ENCODE measurements at regions of chr11 and their contacts with region 1.

Region 1: DNA sequence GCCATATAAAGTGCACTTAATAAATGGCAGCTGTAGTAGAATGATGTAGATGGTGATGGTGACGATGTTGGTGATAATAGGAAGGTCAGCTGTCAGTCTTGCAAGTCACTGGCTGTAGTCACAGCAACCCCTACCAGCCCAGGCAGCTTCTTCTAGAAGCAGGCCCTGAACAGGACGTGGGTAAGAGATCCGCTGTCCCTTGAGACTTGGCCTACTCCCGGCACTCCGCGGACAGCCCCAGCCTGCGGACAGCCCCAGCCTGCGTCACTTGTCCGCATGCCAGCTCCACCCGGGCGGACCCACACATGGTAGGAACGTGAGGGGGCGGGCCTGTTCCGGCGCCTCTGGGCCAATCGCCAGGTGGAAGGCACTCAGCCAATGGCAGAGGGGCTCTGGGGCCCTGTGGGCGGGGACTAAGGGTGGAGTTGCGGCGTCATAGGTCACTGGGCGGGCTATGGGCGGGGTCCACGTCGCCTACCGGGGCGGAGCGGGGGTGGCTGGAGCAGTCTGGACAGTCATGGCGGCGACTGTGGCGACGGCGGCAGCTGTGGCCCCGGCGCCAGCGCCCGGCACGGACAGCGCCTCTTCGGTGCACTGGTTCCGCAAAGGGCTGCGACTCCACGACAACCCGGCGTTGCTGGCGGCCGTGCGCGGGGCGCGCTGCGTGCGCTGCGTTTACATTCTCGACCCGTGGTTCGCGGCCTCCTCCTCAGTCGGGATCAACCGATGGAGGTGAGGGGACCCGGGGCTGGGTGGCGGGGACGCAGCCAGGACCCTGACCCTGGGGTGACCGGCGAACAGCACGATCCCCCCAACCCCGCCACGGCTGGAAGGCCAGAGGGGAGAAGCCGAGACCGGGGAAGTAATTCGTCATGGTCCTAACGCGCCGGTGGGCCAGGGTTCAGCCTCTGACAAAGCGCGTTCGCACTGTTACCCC is at the start of gene CRY2:
- DNase-seq: peak; percentile 97
- H3K4me3 ChIP-seq: peak within 1 kb of the TSS; percentile 76 to 98 (median 98)
- H3K27ac ChIP-seq: peak within 1 kb of the TSS; percentile 80
- H3K4me1 ChIP-seq: peaks cover 8% of the 10 kb centered on the region
- H3K27me3 ChIP-seq: no peaks in the 10 kb centered on the region
- CTCF ChIP-seq: no peak
- total RNA-seq, gene CRY2: 13.2 to 14.0 TPM

Region 2: GRCh38 chr11:44565211-44565952 is 1281.9 kb before region 1 on chr11 and contains the start of gene CD82:
- CTCF ChIA-PET with region 1: interaction called, 17 read pairs
- dilution Hi-C with region 1: no loop called
- in situ Hi-C with region 1: no loop called
- intact Hi-C with region 1: no loop called
- DNase-seq: peak; percentile 98
- H3K4me3 ChIP-seq: peak within 1 kb of the TSS; percentile 40 to 83 (median 69)
- H3K27ac ChIP-seq: peak within 1 kb of the TSS; percentile 95
- H3K4me1 ChIP-seq: peaks cover 83% of the 10 kb centered on the region
- H3K27me3 ChIP-seq: no peaks in the 10 kb centered on the region
- CTCF ChIP-seq: peak in 1 of 2 donors; percentile 35
- total RNA-seq, gene CD82: 38.8 to 309 TPM

Region 3: DNA sequence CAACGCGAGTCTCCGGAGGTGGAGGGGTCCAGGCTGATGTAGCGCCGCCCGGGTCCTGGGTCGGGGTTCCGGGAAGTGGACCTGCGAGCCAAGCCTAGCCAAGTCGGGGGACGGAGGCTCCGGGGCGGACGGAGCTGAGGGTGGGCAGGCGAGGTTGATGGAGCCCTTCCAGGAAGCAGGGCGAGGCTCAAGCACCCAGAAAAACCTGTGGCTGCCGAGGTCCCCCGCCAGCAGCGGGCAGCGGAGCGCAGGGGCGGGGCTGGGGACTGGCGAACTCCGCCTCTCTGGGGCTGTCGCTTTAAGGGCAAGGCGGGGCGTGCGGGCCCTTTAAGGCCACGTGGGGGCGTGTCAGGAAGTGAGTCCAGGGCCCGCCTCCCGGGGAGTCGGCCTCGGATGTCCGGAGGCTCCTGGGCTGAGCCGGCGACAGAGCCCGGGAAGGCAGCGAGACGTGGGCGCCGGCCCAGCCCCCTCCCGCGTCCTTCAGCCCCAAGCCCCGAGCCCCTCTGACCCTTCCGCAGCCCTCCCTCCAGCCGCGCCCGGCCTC is 42.4 kb before region 1 on chr11 and contains the start of gene SLC35C1:
- CTCF ChIA-PET with region 1: no interaction called
- dilution Hi-C with region 1: no loop called
- in situ Hi-C with region 1: no loop called
- intact Hi-C with region 1: loop called (anchors 2 kb)
- DNase-seq: peak; percentile 91
- H3K4me3 ChIP-seq: peak within 1 kb of the TSS; percentile 74 to 91 (median 85)
- H3K27ac ChIP-seq: peak within 1 kb of the TSS; percentile 43
- H3K4me1 ChIP-seq: peaks cover 15% of the 10 kb centered on the region
- H3K27me3 ChIP-seq: no peaks in the 10 kb centered on the region
- CTCF ChIP-seq: peak in 1 of 2 donors; percentile 23
- total RNA-seq, gene SLC35C1: 11.2 to 18.0 TPM

Region 4: DNA sequence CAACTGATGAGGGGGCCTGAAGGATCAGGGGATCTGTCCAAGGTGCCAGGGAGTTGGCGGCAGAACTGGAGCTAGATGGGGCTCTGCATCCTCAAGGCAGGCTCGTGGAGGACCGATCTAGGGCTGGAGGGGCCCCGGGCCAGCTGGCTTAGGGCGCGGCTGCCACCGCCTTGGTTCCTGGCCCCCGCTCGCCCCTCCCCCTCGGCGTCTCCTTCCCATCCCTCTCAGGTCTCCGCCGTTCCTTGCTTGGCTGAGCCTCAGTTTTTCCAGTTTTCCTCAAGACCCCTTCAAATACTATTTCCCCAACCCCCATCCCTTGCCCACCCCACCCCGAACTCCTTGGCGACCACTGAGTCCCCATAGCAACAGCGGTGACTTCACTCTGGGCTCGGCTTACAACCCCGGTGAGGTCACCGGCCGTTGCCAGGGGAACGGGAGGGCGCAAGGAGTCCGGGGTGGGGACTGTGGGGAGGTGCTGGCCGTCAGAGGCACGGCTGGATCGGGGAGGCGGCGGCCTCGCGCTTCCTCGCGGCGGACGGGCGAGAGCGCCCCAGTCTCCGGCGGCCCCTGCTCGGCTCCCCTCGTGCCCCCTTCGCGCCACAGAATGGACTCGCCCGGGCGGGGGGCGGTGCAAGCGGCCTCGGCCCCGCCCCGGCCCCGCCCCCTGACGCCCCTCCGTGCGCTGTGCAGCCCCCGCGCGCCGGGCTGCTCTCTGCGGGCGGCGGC is 52.4 kb after region 1 on chr11:
- CTCF ChIA-PET with region 1: no interaction called
- dilution Hi-C with region 1: no loop called
- in situ Hi-C with region 1: no loop called
- intact Hi-C with region 1: loop called (anchors 5 kb)
- DNase-seq: peak; percentile 80
- H3K4me3 ChIP-seq: peak overlapping the region; percentile 32 to 57 (median 49)
- H3K27ac ChIP-seq: peak overlapping the region; percentile 22
- H3K4me1 ChIP-seq: peaks cover 13% of the 10 kb centered on the region
- H3K27me3 ChIP-seq: no peaks in the 10 kb centered on the region
- CTCF ChIP-seq: no peak

Region 5: DNA sequence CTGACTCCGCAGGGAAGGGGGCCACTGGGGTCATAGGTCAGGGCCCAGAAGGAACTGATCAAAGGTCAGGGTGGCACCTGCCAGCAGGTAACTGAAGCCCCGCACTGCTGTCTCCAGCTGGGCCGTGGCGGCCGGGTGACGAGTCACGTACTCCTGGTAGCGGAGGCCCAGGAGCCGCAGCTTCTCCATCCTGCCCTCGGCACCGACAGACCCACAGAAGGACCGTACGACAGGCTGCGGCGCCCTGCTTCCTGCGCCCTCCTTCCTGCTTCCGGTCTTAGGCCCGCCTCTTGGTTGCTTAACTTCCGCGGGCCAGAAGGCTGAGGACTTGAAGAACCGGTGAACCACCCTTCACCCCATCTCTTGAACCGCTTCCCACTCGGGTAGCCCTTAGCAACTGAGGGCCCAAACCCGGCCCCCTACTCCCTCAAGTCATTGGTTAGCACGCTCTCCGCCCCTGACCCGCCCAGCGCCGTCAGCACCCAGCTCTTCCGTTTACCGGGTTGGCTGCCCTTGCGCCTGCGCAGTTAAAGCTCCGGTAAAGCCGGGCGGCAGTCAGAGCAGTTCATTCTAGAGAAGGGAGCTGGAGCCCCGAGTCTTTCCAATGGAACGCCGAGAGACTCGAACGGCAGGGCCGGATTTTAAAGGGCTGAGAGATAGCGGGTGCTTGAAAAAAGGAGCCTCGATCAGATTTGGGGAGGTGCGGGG is 70.5 kb after region 1 on chr11 and contains the start of gene PEX16:
- CTCF ChIA-PET with region 1: no interaction called
- dilution Hi-C with region 1: no loop called
- in situ Hi-C with region 1: no loop called
- intact Hi-C with region 1: loop called (anchors 2 kb)
- DNase-seq: peak; percentile 99
- H3K4me3 ChIP-seq: peak within 1 kb of the TSS; percentile 66 to 92 (median 84)
- H3K27ac ChIP-seq: peak within 1 kb of the TSS; percentile 56
- H3K4me1 ChIP-seq: peaks cover 11% of the 10 kb centered on the region
- H3K27me3 ChIP-seq: no peaks in the 10 kb centered on the region
- CTCF ChIP-seq: no peak
- total RNA-seq, gene PEX16: 28.5 to 30.9 TPM

Region 6: DNA sequence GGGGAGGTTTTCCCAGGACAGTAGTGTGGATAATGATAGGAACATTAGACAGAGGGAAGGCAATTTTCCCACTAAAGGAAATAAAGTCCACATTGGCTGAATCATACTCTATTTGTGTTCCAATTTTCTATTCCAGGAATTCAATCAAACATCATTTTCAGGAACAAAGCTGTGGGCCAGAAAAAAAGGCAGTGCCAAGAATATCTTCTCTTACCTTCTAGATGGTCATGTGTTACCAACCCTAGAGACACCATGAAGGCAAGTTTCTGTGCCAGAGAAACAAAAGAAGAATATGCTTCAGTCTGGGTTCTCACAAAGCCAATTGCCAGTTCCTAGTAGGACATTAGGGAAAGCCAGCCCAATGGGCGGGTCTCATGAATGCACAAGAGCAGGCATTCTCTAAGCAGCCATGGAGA is 102.8 kb after region 1 on chr11:
- CTCF ChIA-PET with region 1: no interaction called
- dilution Hi-C with region 1: no loop called
- in situ Hi-C with region 1: no loop called
- intact Hi-C with region 1: no loop called
- DNase-seq: no peak
- H3K4me3 ChIP-seq: no peak overlapping the region
- H3K27ac ChIP-seq: no peak overlapping the region
- H3K4me1 ChIP-seq: no peaks in the 10 kb centered on the region
- H3K27me3 ChIP-seq: no peaks in the 10 kb centered on the region
- CTCF ChIP-seq: no peak

Region 7: DNA sequence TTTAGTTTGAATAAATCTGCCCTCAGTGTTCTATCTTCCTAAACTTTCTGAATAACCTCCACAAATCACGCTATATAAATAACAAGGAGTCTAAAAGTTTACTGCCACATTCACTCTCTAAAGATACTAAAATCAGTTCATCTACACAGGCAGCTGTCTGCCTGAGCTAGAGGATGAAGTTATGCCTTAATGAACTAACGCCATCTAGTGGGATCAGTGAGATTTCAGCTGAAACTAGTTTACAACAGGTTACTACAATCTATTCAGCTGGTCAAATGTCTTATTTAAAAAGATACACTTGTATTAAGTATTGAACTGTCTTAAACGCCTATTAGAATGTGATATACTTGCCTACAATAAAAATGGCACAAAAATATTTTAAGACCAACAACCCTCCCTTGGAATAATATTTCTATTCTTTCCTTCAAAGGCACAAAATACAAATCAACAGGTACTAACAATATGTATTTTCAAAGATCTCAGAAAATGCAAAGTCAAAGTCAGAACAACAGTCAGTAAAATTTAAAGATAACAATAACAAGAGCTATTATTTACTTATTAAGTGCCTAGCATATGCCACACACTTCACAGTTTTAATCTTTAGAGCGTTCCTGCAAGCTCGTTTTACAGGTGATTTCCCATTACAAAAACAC is 159.3 kb after region 1 on chr11:
- CTCF ChIA-PET with region 1: no interaction called
- dilution Hi-C with region 1: no loop called
- in situ Hi-C with region 1: no loop called
- intact Hi-C with region 1: loop called (anchors 1 kb)
- DNase-seq: peak; percentile 57
- H3K4me3 ChIP-seq: no peak overlapping the region
- H3K27ac ChIP-seq: no peak overlapping the region
- H3K4me1 ChIP-seq: no peaks in the 10 kb centered on the region
- H3K27me3 ChIP-seq: no peaks in the 10 kb centered on the region
- CTCF ChIP-seq: peak; percentile 72 to 80

Measured in mammary epithelial cell (primary cell).